ENCODE measurements at regions of chr4 and their contacts with region 1.

Region 1: DNA sequence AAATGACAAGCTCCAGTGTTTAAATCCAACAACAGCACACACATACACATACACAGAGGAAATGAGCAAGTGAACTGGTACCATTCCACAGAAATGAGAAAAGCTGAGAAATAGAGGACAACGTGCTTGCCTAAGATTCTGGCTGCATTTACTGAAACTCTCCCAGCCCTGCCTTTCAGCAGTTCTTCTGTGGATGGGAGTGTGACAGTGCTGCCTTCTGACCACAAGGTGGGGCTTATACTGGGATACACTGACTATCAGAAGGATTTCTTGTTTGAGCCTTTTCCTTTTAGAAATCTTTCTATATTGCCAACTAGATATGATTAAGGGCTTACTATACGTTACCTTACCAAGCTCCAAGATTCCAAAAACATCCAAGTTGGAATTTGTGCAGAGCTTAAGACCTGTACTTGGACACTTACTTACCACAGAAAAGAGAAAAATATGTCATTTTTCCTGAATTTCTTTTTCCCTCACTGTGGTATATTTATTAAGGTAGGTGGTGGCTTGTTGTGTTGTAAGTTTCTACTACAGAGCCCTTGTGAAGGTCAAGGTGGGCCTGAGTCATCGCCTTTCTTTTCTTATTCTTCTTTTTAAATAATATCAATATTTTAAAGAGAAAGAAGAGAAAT is 10.7 kb upstream of the CXCL8 start:
- DNase-seq: peak; percentile 70
- H3K4me3 ChIP-seq: no peak overlapping the region
- H3K27ac ChIP-seq: no peak overlapping the region
- H3K27me3 ChIP-seq: no peaks in the 10 kb centered on the region
- CTCF ChIP-seq: peak; percentile 94

Region 2: GRCh38 chr4:73662709-73663546 is 66.7 kb before region 1 on chr4:
- CTCF ChIA-PET with region 1: interaction called, 19 read pairs
- POLR2A ChIA-PET with region 1: no interaction called
- DNase-seq: no peak
- H3K4me3 ChIP-seq: no peak overlapping the region
- H3K27ac ChIP-seq: no peak overlapping the region
- H3K27me3 ChIP-seq: no peaks in the 10 kb centered on the region
- CTCF ChIP-seq: peak; percentile 60

Region 3: DNA sequence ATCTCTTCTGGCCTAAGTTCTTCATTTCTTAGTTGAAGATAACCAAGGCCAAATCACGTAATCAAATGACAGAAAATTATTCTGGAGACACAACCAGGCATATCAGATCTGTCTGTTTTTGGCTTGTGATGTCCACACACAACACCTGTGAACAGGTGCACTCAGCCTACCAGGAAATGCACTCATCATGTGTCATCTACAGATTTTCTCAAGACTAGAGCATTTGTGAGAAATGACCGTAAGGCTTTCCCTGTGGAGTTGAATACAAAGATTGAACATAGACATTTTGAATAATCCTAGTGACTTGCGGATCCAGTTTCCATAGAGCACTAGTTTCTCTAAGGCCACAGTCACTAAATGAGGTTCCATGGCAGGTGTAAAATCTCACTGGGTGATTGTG is 16.0 kb before region 1 on chr4:
- CTCF ChIA-PET with region 1: interaction called, 13 read pairs
- POLR2A ChIA-PET with region 1: no interaction called
- DNase-seq: no peak
- H3K4me3 ChIP-seq: no peak overlapping the region
- H3K27ac ChIP-seq: no peak overlapping the region
- H3K27me3 ChIP-seq: no peaks in the 10 kb centered on the region
- CTCF ChIP-seq: no peak

Region 4: GRCh38 chr4:73718375-73719373 is 11.0 kb before region 1 on chr4:
- CTCF ChIA-PET with region 1: interaction called, 13 read pairs
- POLR2A ChIA-PET with region 1: no interaction called
- DNase-seq: no peak
- H3K4me3 ChIP-seq: no peak overlapping the region
- H3K27ac ChIP-seq: no peak overlapping the region
- H3K27me3 ChIP-seq: no peaks in the 10 kb centered on the region
- CTCF ChIP-seq: no peak

Region 5: DNA sequence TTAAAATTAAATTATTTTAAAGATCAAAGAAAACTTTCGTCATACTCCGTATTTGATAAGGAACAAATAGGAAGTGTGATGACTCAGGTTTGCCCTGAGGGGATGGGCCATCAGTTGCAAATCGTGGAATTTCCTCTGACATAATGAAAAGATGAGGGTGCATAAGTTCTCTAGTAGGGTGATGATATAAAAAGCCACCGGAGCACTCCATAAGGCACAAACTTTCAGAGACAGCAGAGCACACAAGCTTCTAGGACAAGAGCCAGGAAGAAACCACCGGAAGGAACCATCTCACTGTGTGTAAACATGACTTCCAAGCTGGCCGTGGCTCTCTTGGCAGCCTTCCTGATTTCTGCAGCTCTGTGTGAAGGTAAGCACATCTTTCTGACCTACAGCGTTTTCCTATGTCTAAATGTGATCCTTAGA is 10.7 kb after region 1 on chr4 and contains the start of gene CXCL8:
- CTCF ChIA-PET with region 1: interaction called, 12 read pairs
- POLR2A ChIA-PET with region 1: no interaction called
- DNase-seq: peak; percentile 38
- H3K4me3 ChIP-seq: peak within 1 kb of the TSS; percentile 41
- H3K27ac ChIP-seq: no peak within 1 kb of the TSS
- H3K27me3 ChIP-seq: no peaks in the 10 kb centered on the region
- CTCF ChIP-seq: no peak
- polyA plus RNA-seq, gene CXCL8: 4.3 and 6.1 TPM in 2 replicates

Region 6: GRCh38 chr4:73922766-73923630 is 193.3 kb after region 1 on chr4:
- CTCF ChIA-PET with region 1: interaction called, 17 read pairs
- POLR2A ChIA-PET with region 1: no interaction called
- DNase-seq: no peak
- H3K4me3 ChIP-seq: no peak overlapping the region
- H3K27ac ChIP-seq: no peak overlapping the region
- H3K27me3 ChIP-seq: no peaks in the 10 kb centered on the region
- CTCF ChIP-seq: peak; percentile 54